Sciatic nerve (tissue), 2 donors: ENCODE measurements at regions of chr22 and their contacts with region 1.

Region 1: DNA sequence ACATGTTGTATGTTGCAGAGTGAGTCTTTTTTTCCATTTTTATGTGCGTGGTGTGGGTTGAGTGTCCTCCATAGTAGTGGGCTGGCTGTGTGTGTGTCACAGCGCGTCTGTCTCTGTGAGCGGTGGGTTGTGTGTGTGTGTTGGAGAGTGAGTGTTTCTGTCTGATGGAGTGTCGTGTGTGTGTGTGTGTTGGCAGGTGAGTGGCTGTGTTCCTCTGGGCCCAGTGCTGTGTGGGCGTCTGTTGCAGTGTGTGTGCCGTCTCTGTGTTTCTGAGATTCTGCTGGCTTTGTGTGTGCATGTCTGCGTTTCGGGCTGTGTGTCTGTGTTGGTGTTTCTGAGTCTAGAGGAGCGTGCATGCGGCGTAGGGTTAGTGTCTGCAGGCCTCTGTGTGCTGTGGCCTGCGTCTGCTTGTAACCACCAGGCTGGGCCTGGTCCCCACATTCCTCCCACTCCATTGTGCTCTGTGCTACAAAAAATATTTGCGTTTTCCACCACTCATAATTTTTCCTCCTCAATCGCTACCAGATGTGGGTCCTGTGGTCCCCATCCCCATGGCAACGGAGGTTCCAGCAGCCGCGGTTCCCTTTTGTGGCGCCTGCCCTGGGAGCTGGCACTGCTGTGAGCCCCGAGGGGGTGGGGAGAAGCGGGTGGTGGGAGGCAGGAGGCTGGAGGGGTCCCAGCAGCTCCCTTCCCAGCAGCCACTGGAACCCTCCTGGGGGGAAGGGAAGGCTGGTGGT is 15.2 kb downstream of the SCARF2 start:
- DNase-seq: no peak
- ATAC-seq: peak; percentile 32

Region 2: GRCh38 chr22:19543970-19544708 is 878.3 kb before region 1 on chr22:
- intact Hi-C with region 1: no loop called
- DNase-seq: no peak
- ATAC-seq: peak; percentile 20

Region 3: GRCh38 chr22:20456064-20456721 is 33.8 kb after region 1 on chr22:
- intact Hi-C with region 1: loop called (anchors 5 kb)
- DNase-seq: peak; percentile 85
- ATAC-seq: peak; percentile 83